ENCODE measurements at regions of chr5 and their contacts with region 1.

Region 1: DNA sequence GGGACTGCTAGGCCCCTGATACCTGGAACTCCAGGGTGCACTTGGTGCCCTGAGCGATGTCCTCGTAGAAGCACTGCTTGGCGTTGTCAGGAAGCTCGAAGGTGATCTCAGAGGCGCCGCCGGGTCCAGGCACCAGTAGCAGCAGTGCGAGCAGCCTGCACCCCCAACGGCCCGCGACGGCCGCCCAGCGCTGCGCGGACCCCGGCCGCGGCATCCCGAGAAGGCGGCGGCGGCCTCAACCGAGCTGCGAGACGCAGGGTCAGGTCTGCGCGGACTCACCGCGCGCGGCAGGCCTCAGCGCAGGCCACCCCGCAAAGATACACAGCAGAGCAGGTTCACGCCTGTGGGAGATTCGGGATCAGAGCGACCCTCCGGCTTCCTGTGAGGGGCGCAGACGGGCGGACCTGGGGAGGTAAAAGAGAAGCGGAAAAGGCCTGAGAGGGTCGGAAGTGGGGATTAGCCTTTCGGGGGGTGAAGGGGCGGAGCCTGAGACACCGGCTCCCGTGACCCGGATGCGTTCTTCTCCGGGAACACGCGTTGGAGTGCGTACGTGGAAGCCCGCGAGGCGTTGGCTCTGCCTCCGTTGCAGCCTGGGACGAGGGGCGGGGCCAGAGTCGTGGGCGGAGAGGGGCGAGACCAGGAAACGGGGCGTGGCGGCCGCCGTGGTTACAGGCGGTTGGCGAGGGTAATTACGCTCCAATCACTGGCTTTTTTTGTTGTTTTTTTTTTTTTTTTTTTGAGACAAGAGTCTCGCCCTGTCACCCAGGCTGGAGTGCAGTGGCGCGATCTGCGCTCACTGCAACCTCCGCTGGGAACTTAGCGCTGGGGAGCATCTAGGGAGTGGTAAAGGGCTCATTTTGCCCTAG is at the start of gene TMED7:
- DNase-seq: peak; percentile 99
- ATAC-seq: peak; percentile 92
- H3K4me3 ChIP-seq: peak within 1 kb of the TSS; percentile 67 to 92 (median 87)
- H3K4me3 Mint-ChIP-seq: no peak within 1 kb of the TSS
- H3K27ac ChIP-seq: peak within 1 kb of the TSS; percentile 88 to 96
- H3K27ac Mint-ChIP-seq: no peak within 1 kb of the TSS
- H3K4me1 ChIP-seq: peaks cover 32 to 35% of the 10 kb centered on the region in 2 donors
- H3K4me1 Mint-ChIP-seq: peaks cover 27% of the 10 kb centered on the region
- H3K27me3 ChIP-seq: peaks cover 0 to 5% (median 0%) of the 10 kb centered on the region in 4 experiments
- H3K27me3 Mint-ChIP-seq: no peaks in the 10 kb centered on the region
- CTCF ChIP-seq: no peak
- total RNA-seq, gene TMED7: 40.3 and 40.4 TPM in 2 replicates

Region 2: DNA sequence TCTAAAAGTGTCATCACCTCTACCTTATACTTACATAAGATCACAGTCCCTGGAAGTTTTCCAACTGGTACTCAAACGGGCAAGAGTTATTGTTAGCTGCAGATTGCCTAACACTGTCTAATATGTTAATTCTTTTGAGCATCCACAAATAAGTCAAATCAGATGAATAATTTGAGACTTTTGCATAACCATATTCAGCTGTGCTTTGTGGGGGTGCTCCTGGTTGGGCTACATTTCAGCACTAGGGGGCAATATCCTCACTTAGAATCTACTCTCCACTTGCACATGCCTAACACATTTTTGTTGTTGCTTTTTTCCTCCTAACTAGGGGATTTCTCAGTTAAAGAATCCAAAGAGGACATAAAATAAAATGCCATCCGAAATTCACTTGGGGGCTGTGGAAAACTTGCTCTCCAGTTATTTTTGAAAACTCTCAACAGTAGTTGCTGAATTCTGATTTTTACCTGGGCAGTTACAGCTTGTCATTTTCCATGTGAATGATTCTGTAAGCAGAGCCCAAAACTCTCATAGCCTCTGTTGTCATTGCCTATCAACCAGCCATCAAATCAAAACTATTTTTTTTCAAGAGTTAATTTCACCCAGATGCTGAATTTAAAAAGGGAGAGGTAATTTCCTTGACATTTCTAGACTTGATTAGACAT is 527.6 kb before region 1 on chr5:
- CTCF ChIA-PET with region 1: no interaction called
- POLR2A ChIA-PET with region 1: interaction called, 10 read pairs
- intact Hi-C with region 1: no loop called
- DNase-seq: peak; percentile 66
- ATAC-seq: peak; percentile 76
- H3K4me3 ChIP-seq: no peak overlapping the region
- H3K4me3 Mint-ChIP-seq: no peak overlapping the region
- H3K27ac ChIP-seq: no peak overlapping the region
- H3K27ac Mint-ChIP-seq: no peak overlapping the region
- H3K4me1 ChIP-seq: no peaks in the 10 kb centered on the region
- H3K4me1 Mint-ChIP-seq: peaks cover 2% of the 10 kb centered on the region
- H3K27me3 ChIP-seq: no peaks in the 10 kb centered on the region
- H3K27me3 Mint-ChIP-seq: peaks cover 3% of the 10 kb centered on the region
- CTCF ChIP-seq: peak; percentile 83

Region 3: GRCh38 chr5:115169487-115170133 is 456.2 kb before region 1 on chr5 and contains the start of gene TRIM36:
- CTCF ChIA-PET with region 1: no interaction called
- POLR2A ChIA-PET with region 1: no interaction called
- intact Hi-C with region 1: loop called (anchors 1 kb)
- DNase-seq: peak; percentile 94
- ATAC-seq: peak; percentile 92
- H3K4me3 ChIP-seq: peak within 1 kb of the TSS; percentile 53 to 89 (median 75)
- H3K4me3 Mint-ChIP-seq: peak within 1 kb of the TSS; percentile 92
- H3K27ac ChIP-seq: no peak within 1 kb of the TSS
- H3K27ac Mint-ChIP-seq: peak within 1 kb of the TSS; percentile 80
- H3K4me1 ChIP-seq: peaks cover 20 to 21% of the 10 kb centered on the region in 2 donors
- H3K4me1 Mint-ChIP-seq: peaks cover 14% of the 10 kb centered on the region
- H3K27me3 ChIP-seq: peaks cover 0 to 62% (median 32%) of the 10 kb centered on the region in 4 experiments
- H3K27me3 Mint-ChIP-seq: peaks cover 59% of the 10 kb centered on the region
- CTCF ChIP-seq: no peak
- total RNA-seq, gene TRIM36: 0.39 and 1.6 TPM in 2 replicates

Region 4: DNA sequence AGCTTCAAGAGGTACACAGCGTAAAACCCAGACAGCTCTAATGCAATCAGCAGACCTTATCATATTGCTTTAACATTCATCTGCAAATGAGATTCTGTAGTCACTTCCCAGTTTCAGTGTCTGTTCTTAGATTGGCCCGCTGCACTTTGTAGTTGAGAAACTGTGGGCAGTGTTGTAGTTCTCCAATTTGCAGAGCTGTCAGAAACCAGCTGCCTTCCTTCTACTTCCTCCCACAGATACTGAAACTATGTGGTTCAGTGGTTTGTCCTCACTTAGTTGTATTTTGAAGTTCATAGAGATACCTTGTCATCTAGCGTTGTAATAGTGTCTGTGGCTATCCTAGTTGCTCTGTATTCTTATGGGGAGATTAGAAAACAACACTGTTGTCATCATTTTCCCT is 416.5 kb before region 1 on chr5:
- CTCF ChIA-PET with region 1: no interaction called
- POLR2A ChIA-PET with region 1: no interaction called
- intact Hi-C with region 1: loop called (anchors 1 kb)
- DNase-seq: peak; percentile 91
- ATAC-seq: peak; percentile 97
- H3K4me3 ChIP-seq: no peak overlapping the region
- H3K4me3 Mint-ChIP-seq: peak overlapping the region; percentile 70
- H3K27ac ChIP-seq: peak overlapping the region in 1 of 2 donors; percentile 39
- H3K27ac Mint-ChIP-seq: peak overlapping the region; percentile 74
- H3K4me1 ChIP-seq: peaks cover 10 to 20% of the 10 kb centered on the region in 2 donors
- H3K4me1 Mint-ChIP-seq: peaks cover 19% of the 10 kb centered on the region
- H3K27me3 ChIP-seq: no peaks in the 10 kb centered on the region
- H3K27me3 Mint-ChIP-seq: no peaks in the 10 kb centered on the region
- CTCF ChIP-seq: no peak

Region 5: GRCh38 chr5:115296124-115297022 is 329.4 kb before region 1 on chr5 and contains the start of gene CCDC112:
- CTCF ChIA-PET with region 1: no interaction called
- POLR2A ChIA-PET with region 1: no interaction called
- intact Hi-C with region 1: loop called (anchors 1 kb)
- DNase-seq: peak; percentile 82
- ATAC-seq: peak; percentile 86
- H3K4me3 ChIP-seq: peak within 1 kb of the TSS; percentile 53 to 78 (median 70)
- H3K4me3 Mint-ChIP-seq: peak within 1 kb of the TSS; percentile 86
- H3K27ac ChIP-seq: peak within 1 kb of the TSS in 1 of 2 donors; percentile 39
- H3K27ac Mint-ChIP-seq: peak within 1 kb of the TSS; percentile 16
- H3K4me1 ChIP-seq: peaks cover 7 to 13% of the 10 kb centered on the region in 2 donors
- H3K4me1 Mint-ChIP-seq: peaks cover 16% of the 10 kb centered on the region
- H3K27me3 ChIP-seq: no peaks in the 10 kb centered on the region
- H3K27me3 Mint-ChIP-seq: no peaks in the 10 kb centered on the region
- CTCF ChIP-seq: no peak
- total RNA-seq, gene CCDC112: 9.6 and 11.1 TPM in 2 replicates

Region 6: GRCh38 chr5:115601701-115602590 is 23.9 kb before region 1 on chr5 and contains the start of gene TICAM2:
- CTCF ChIA-PET with region 1: interaction called, 8 read pairs
- POLR2A ChIA-PET with region 1: interaction called, 3 read pairs
- intact Hi-C with region 1: loop called (anchors 1 kb)
- DNase-seq: peak; percentile 86
- ATAC-seq: peak; percentile 80
- H3K4me3 ChIP-seq: peak within 1 kb of the TSS; percentile 51 to 87 (median 82)
- H3K4me3 Mint-ChIP-seq: peak within 1 kb of the TSS; percentile 94
- H3K27ac ChIP-seq: peak within 1 kb of the TSS; percentile 71 to 91
- H3K27ac Mint-ChIP-seq: peak within 1 kb of the TSS; percentile 98
- H3K4me1 ChIP-seq: peaks cover 38% of the 10 kb centered on the region in 2 donors
- H3K4me1 Mint-ChIP-seq: peaks cover 43% of the 10 kb centered on the region
- H3K27me3 ChIP-seq: no peaks in the 10 kb centered on the region
- H3K27me3 Mint-ChIP-seq: no peaks in the 10 kb centered on the region
- CTCF ChIP-seq: peak; percentile 54
- total RNA-seq, gene TICAM2: 4.9 and 5.4 TPM in 2 replicates

Region 7: GRCh38 chr5:115735108-115735998 is 109.5 kb after region 1 on chr5:
- CTCF ChIA-PET with region 1: no interaction called
- POLR2A ChIA-PET with region 1: no interaction called
- intact Hi-C with region 1: no loop called
- DNase-seq: no peak
- ATAC-seq: no peak
- H3K4me3 ChIP-seq: no peak overlapping the region
- H3K4me3 Mint-ChIP-seq: peak overlapping the region; percentile 56
- H3K27ac ChIP-seq: no peak overlapping the region
- H3K27ac Mint-ChIP-seq: peak overlapping the region; percentile 17
- H3K4me1 ChIP-seq: peaks cover 12 to 29% of the 10 kb centered on the region in 2 donors
- H3K4me1 Mint-ChIP-seq: peaks cover 34% of the 10 kb centered on the region
- H3K27me3 ChIP-seq: no peaks in the 10 kb centered on the region
- H3K27me3 Mint-ChIP-seq: peaks cover 5% of the 10 kb centered on the region
- CTCF ChIP-seq: no peak

Region 8: DNA sequence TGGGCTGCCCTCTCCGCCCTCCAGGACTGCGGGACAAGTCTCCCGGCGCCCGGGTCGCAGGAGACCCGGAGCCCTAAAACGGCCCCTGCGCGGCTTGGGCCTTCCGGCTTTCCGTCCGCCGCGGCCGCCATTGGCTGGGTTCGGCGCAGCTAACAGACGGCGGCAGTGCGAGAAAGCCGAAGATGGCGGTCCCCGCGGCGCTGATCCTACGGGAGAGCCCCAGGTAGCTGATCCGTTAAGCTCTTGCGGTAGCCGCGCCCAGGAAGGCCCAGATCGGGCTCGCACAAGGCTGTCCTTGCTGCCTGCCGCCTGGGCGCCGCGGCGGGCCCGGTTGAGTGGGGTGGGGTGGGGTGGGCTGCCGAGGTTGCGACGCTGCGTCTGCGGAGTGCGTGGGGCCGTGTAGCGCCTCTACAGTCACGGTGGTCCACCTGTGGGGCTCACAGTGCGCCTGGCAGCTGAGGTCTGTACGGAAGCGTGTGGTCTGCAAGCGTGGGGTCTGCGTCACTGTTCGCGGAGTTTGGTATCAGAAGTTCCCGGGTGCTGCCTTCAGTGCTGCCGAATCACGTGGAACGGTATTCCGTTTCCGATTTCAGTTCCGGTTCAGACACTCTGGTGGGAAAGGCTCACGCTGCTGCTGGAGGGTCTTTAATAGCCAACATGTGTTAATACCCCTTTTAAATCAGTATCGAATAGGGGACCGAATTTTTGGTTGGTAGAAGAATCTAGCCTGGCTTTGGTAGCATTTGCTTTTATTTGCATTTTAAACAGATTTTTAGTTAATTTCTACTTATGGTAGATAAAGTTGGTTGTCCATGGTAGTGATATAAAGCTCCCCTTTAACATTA is 459.3 kb after region 1 on chr5 and contains the start of gene COMMD10:
- CTCF ChIA-PET with region 1: no interaction called
- POLR2A ChIA-PET with region 1: interaction called, 3 read pairs
- intact Hi-C with region 1: loop called (anchors 1 kb)
- DNase-seq: peak; percentile 95
- ATAC-seq: peak; percentile 89
- H3K4me3 ChIP-seq: peak within 1 kb of the TSS; percentile 67 to 90 (median 85)
- H3K4me3 Mint-ChIP-seq: peak within 1 kb of the TSS; percentile 96
- H3K27ac ChIP-seq: peak within 1 kb of the TSS; percentile 96
- H3K27ac Mint-ChIP-seq: peak within 1 kb of the TSS; percentile 99
- H3K4me1 ChIP-seq: peaks cover 16 to 19% of the 10 kb centered on the region in 2 donors
- H3K4me1 Mint-ChIP-seq: peaks cover 39% of the 10 kb centered on the region
- H3K27me3 ChIP-seq: no peaks in the 10 kb centered on the region
- H3K27me3 Mint-ChIP-seq: no peaks in the 10 kb centered on the region
- CTCF ChIP-seq: no peak
- total RNA-seq, gene COMMD10: 48.2 and 48.7 TPM in 2 replicates